Dendritic cell treated with granulocyte-macrophage colony-stimulating factor and Interleukin-4, amounts not matched to agents 40 ng/mL and 50 ng/mL, for 4 days (primary cell): ENCODE measurements at regions of chr5 and their contacts with region 1.

Region 1: DNA sequence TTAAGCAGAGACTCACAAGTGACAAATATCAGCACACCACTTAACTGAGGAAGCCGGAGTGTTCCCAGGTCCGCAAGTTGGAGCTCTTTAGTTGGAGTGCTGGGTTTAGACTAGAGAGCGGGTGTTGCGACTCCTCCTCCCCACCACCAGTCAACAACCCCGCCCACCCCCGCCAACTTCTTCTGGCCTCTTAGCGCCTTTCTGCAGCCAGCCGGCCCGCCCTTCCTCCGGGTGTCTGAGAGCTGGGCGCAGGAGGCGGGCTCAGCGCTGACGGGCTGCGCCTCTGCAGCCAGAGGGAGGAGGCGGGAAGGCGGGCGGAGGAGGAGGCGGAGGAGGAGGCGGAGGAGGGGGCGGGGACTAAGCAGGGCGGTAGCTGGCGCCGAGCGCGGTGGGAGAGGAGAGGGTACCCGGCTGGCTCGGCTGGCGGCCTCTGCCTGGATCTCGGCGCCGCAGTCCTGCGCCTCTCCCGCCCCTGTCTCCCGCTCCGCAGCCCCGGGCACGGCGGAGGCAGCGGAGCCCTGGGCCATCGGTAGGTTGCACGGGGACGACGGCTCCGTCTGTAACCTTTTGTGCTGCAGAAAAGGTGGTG is at the start of gene MACIR:
- H3K4me3 Mint-ChIP-seq: peak within 1 kb of the TSS; percentile 84
- H3K27ac Mint-ChIP-seq: peak within 1 kb of the TSS; percentile 70
- H3K4me1 Mint-ChIP-seq: peaks cover 31% of the 10 kb centered on the region
- H3K27me3 Mint-ChIP-seq: peaks cover 11% of the 10 kb centered on the region

Region 2: GRCh38 chr5:103340717-103341388 is 82.4 kb after region 1 on chr5:
- intact Hi-C with region 1: loop called (anchors 5 kb)
- H3K4me3 Mint-ChIP-seq: no peak overlapping the region
- H3K27ac Mint-ChIP-seq: peak overlapping the region; percentile 45
- H3K4me1 Mint-ChIP-seq: no peaks in the 10 kb centered on the region
- H3K27me3 Mint-ChIP-seq: no peaks in the 10 kb centered on the region

Region 3: DNA sequence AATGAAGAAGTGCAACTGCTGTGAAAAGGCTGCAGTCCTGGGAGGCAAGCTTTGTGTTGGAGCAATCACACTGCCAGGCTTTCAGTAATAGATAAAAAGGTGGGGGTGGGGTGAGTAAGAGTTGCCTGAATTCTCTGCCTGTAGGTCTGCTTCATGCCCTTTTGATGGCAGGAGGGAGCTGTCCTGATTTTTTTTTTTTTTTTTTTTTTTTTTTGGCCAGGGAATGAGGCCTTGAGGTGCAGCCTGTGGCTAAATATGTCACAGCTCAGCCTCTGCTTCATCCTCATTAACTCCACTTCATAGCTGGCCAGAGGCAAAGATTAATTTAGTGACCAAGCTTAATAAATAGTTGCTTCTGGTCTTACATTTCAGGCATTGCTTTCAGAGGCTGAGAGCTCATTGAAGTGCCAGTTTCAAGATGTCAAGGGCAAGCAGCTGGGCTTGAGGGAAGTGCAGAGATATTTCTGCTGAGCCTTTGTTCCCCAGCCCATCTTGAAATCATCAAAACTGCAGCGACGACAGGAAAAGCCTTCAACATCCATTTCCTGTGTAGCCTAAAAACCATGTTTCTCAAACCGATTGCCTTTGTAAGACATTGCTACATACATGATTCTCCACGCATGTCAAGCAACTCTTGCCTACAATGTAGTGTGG is 134.8 kb after region 1 on chr5:
- intact Hi-C with region 1: no loop called
- H3K4me3 Mint-ChIP-seq: no peak overlapping the region
- H3K27ac Mint-ChIP-seq: peak overlapping the region; percentile 65
- H3K4me1 Mint-ChIP-seq: peaks cover 16% of the 10 kb centered on the region
- H3K27me3 Mint-ChIP-seq: no peaks in the 10 kb centered on the region